ENCODE measurements at regions of chr15 and their contacts with region 1.

Region 1: GRCh38 chr15:78893538-78893937 is 20.8 kb downstream of the MORF4L1 start:
- DNase-seq: no peak
- ATAC-seq: no peak
- H3K4me3 ChIP-seq: no peak overlapping the region
- H3K27ac ChIP-seq: no peak overlapping the region
- H3K4me1 ChIP-seq: no peaks in the 10 kb centered on the region
- H3K27me3 ChIP-seq: no peaks in the 10 kb centered on the region
- CTCF ChIP-seq: no peak
- EP300 ChIP-seq: no peak
- POLR2A ChIP-seq: no peak
- RAD21 ChIP-seq: no peak

Region 2: GRCh38 chr15:78872972-78873792 is 20.4 kb before region 1 on chr15:
- CTCF ChIA-PET with region 1: no interaction called
- POLR2A ChIA-PET with region 1: interaction called, 12 read pairs
- in situ Hi-C with region 1: no loop called
- intact Hi-C with region 1: no loop called
- DNase-seq: peak; percentile 67 to 96 (median 76)
- ATAC-seq: peak; percentile 87
- H3K4me3 ChIP-seq: peak overlapping the region; percentile 99
- H3K27ac ChIP-seq: peak overlapping the region; percentile 100
- H3K4me1 ChIP-seq: peaks cover 15 to 18% of the 10 kb centered on the region in 2 experiments
- H3K27me3 ChIP-seq: no peaks in the 10 kb centered on the region
- CTCF ChIP-seq: peak; percentile 69 to 79 (median 71)
- EP300 ChIP-seq: peak; percentile 16; the same call in 1 of the 2 replicates
- POLR2A ChIP-seq: peak; percentile 90
- RAD21 ChIP-seq: no peak

Region 3: GRCh38 chr15:78880242-78880533 is 13.3 kb before region 1 on chr15:
- CTCF ChIA-PET with region 1: no interaction called
- POLR2A ChIA-PET with region 1: interaction called, 11 read pairs
- in situ Hi-C with region 1: no loop called
- intact Hi-C with region 1: no loop called
- DNase-seq: no peak
- ATAC-seq: no peak
- H3K4me3 ChIP-seq: no peak overlapping the region
- H3K27ac ChIP-seq: no peak overlapping the region
- H3K4me1 ChIP-seq: peaks cover 8 to 29% of the 10 kb centered on the region in 2 experiments; a peak in 4 of 5 replicates
- H3K27me3 ChIP-seq: no peaks in the 10 kb centered on the region
- CTCF ChIP-seq: no peak
- EP300 ChIP-seq: no peak
- POLR2A ChIP-seq: no peak
- RAD21 ChIP-seq: no peak

Region 4: GRCh38 chr15:78904599-78905358 is 11.2 kb after region 1 on chr15:
- CTCF ChIA-PET with region 1: no interaction called
- POLR2A ChIA-PET with region 1: interaction called, 25 read pairs
- in situ Hi-C with region 1: no loop called
- intact Hi-C with region 1: no loop called
- DNase-seq: no peak
- ATAC-seq: no peak
- H3K4me3 ChIP-seq: no peak overlapping the region
- H3K27ac ChIP-seq: no peak overlapping the region
- H3K4me1 ChIP-seq: peaks cover 9 to 11% of the 10 kb centered on the region in 2 experiments
- H3K27me3 ChIP-seq: no peaks in the 10 kb centered on the region
- CTCF ChIP-seq: no peak
- EP300 ChIP-seq: no peak
- POLR2A ChIP-seq: 0 out of 2 replicates have a peak, but pooled peaks have one; percentile 23
- RAD21 ChIP-seq: no peak

Measured in K562 (cell line).